ENCODE measurements at regions of chr7 and their contacts with region 1.

Region 1: DNA sequence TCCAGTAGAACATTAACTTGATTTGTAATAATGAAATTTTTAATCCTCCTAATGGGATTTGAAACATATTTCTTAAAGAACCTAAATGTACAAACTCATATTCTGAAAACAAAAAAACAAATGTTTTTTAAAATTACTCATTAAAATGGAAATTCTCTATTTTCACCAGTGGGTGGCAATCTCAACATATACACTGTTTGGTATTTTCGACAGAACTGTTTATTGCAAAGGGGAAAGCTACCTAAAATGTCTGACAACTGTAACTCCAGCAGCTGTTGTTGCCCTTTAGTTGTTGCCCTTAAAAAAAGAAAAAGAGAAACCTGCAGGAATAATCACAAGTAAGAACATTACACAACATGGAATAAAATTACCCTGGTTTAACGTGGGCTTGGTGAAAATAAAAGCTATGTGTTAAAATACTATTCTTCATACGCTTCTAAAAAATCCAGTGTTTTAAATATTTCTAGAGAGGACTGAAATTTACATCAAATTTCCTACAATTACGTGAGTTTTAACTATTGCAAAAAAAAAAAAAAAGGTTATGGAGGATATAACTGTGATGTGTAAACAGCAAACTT is 54.5 kb downstream of the COL1A2 start:
- DNase-seq: no peak
- H3K4me3 ChIP-seq: peak overlapping the region in 7 of 59 donors; percentile 2 to 38 (median 19)
- H3K27ac ChIP-seq: peak overlapping the region in 1 of 59 donors; percentile 30
- H3K27me3 ChIP-seq: no peaks in the 10 kb centered on the region
- CTCF ChIP-seq: peak; percentile 52 to 92 (median 76)

Region 2: GRCh38 chr7:94649450-94649849 is 200.2 kb after region 1 on chr7:
- intact Hi-C with region 1: loop called in 1 of 2 experiments (anchors 5 kb)
- DNase-seq: no peak
- H3K4me3 ChIP-seq: peak overlapping the region in 19 of 59 donors; percentile 4 to 36 (median 22)
- H3K27ac ChIP-seq: no peak overlapping the region
- H3K27me3 ChIP-seq: no peaks in the 10 kb centered on the region
- CTCF ChIP-seq: no peak

Region 3: GRCh38 chr7:95045236-95045923 is 596.1 kb after region 1 on chr7:
- intact Hi-C with region 1: loop called (anchors 2 to 10 kb)
- DNase-seq: peak in 7 of 10 donors; percentile 25 to 80 (median 58)
- H3K4me3 ChIP-seq: no peak overlapping the region
- H3K27ac ChIP-seq: peak overlapping the region in 22 of 59 donors; percentile 22 to 96 (median 90)
- H3K27me3 ChIP-seq: no peaks in the 10 kb centered on the region
- CTCF ChIP-seq: peak in 52 of 56 donors; percentile 17 to 73 (median 45)

Region 4: DNA sequence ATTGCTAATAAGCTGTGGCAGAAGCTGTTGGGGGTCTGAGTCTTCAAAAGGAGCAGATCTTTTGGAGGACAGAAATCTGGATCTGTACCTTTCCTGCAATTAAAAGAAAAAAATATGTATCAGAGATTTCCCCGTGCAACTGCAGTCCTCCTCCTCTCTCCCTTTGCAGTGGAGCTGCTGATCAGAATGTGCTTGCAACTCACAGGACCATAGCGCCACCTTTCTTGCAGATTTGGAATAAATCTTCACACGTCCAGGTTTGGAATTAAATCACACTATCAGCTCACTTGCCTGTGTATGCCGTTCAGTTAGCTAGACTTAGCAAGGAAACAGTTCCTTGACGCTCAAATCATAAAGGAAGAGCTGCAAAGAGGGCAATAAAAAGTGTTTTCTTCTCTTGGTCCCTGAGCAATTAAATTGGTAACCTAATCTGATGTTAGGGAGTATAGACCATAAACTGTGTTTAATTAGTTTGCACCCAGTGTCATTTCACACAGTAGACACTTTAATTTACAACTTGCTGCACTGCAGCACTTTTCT is 797.7 kb after region 1 on chr7:
- intact Hi-C with region 1: loop called (anchors 5 kb)
- DNase-seq: peak in 8 of 10 donors; percentile 35 to 78 (median 46)
- H3K4me3 ChIP-seq: peak overlapping the region in 49 of 59 donors; percentile 7 to 59 (median 35)
- H3K27ac ChIP-seq: peak overlapping the region in 9 of 59 donors; percentile 8 to 63 (median 29)
- H3K27me3 ChIP-seq: no peaks in the 10 kb centered on the region
- CTCF ChIP-seq: peak; percentile 65 to 91 (median 83)

Region 5: GRCh38 chr7:95690367-95690947 is 1241.2 kb after region 1 on chr7:
- intact Hi-C with region 1: loop called in 1 of 2 experiments (anchors 10 kb)
- DNase-seq: no peak
- H3K4me3 ChIP-seq: peak overlapping the region in 35 of 59 donors; percentile 6 to 57 (median 32)
- H3K27ac ChIP-seq: peak overlapping the region in 42 of 59 donors; percentile 1 to 89 (median 51)
- H3K27me3 ChIP-seq: peaks cover 0 to 3% (median 0%) of the 10 kb centered on the region in 45 donors
- CTCF ChIP-seq: peak; percentile 51 to 87 (median 77)

Measured in dorsolateral prefrontal cortex (tissue), 120 donors.